ENCODE measurements at regions of chr6 and their contacts with region 1.

Region 1: DNA sequence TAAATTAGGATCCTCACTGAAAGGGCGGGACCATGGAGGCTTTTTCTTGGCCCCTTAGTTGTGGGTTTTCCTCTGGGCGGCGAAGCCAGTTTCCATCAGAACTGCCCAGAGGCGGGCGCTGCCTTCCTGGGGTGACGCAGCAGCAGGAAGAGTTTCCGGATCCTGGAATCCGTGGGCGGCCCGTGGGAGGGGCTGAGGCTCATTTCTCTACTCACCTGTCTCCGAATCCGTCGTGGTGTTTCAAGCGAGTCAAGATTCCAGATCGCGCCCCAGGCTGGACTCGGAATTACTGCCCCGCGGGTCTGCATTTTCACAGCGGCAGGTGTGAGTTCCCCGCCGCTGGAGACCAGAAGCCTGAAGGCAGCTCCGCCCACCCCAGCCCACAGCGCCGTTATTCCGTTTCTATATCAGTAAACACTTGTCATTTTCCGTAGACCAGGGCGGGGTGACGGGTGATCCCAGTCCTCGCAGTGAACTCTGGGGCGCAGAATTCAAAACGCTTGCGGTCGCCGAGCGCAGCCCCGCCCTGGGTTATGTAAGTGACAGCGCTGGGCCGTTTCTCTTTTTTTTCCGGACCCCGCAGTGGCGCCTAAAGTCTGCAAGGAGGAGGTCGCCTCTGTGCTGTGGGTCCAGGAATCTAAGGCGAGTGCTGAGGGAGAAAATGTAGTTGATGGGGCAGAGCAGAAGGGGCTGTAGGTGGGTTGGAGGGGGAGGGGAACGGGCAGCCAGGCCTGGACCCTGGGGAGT is 27.2 kb upstream of the POU5F1 start:
- DNase-seq: peak; percentile 66 to 91 (median 84)
- H3K4me3 ChIP-seq: peak overlapping the region; percentile 48 to 95 (median 78)
- H3K27ac ChIP-seq: peak overlapping the region; percentile 58 to 99 (median 95)
- H3K27me3 ChIP-seq: no peaks in the 10 kb centered on the region
- CTCF ChIP-seq: peak in 7 of 56 donors; percentile 0 to 12 (median 10)

Region 2: DNA sequence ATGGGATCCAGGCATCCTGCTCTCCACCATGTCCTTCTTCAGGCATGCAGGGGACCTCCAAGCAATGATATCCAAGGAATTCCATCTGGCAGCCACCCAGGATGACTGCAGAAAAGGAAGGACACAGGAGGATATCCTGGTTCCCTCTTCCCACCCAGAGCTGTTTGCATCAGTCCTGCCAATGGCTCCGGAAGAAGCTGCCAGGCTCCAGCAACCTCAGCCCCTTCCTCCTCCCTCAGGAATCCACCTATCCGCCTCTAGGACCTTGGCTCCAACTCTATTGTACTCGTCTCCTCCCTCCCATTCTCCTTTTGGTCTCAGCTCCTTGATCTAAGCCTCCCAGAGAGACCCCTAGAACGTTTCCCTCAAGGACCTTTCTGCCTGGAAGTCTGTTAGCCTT is 58.1 kb before region 1 on chr6:
- intact Hi-C with region 1: loop called (anchors 1 to 5 kb)
- DNase-seq: no peak
- H3K4me3 ChIP-seq: no peak overlapping the region
- H3K27ac ChIP-seq: no peak overlapping the region
- H3K27me3 ChIP-seq: no peaks in the 10 kb centered on the region
- CTCF ChIP-seq: no peak

Region 3: DNA sequence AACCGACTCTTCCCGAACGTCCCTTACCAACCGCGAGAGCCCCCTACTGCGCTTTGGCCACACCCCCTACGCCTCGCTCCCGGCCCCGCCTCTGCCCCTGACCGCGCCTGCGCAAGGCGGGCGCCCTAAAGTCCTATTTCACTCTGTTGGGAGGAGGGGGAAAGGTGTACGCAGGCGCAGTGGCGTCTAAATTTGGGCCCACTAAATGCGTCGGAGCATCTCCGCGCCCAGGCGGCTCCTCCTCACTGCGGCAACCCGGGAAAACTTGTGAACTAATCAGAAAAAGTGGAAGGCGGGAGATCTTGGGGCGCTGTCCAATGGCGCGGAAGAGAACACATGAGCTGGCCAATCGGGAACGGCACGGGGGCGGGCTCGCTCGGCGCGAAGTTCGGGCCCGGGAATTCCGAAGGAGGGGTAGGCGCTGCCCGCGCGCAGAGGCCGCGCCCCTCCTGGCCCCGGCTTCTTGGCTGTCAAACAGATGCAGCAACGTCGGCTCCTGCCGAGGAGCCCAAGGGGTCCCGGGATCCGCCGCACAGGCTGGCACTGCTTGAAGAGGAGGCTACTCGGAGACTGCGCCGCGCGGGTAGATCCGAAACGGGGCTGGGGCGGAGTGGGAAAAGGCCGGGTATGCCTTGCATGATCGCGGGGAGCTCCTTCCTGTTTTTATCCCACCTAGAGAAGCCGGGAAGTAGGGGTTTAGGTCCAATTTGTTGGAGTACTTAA is 39.4 kb before region 1 on chr6 and contains the start of gene TCF19:
- intact Hi-C with region 1: loop called (anchors 2 to 5 kb)
- DNase-seq: peak; percentile 93 to 98 (median 98)
- H3K4me3 ChIP-seq: peak within 1 kb of the TSS; percentile 60 to 93 (median 79)
- H3K27ac ChIP-seq: peak within 1 kb of the TSS in 31 of 59 donors; percentile 9 to 81 (median 53)
- H3K27me3 ChIP-seq: no peaks in the 10 kb centered on the region
- CTCF ChIP-seq: peak in 25 of 56 donors; percentile 5 to 57 (median 22)
- total RNA-seq, gene TCF19: 0.80 to 6.6 (median 2.3) TPM

Region 4: DNA sequence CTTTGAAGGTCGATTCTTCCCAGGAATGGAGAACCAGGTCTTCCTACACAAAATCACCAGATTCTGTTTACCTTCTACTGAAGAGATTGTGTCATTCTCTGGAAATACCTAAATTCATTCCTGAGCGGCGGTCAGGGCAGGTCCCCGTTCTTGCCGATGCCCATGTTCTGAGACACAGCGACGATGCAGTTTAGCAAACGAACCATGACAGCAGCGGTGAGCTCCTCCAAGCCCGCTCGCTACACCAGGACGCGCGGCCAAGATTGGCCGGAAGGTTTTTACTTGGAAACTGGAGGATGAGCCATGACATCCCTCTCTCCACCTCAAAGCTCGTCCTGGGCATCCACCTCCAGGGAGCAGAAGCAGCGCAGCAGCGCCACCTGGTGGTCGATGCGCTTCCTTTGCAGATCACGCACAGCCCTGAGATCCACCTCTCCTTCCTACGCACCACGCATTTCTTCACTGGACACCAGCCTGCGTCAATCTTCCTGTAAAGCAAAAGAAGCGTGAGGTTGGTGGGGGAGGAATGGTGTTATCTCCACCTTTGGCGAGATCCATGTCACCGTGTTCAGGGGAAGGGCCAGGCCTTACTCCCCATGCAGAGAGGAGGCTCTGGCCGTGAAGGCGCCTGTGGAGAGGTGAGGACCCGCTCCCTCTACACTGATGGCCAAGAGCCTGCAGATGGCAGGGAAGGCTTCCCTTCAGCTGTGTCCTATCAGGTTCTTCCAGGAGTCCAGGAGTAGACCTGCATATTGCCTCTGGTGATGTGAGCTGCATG is 169.2 kb after region 1 on chr6:
- intact Hi-C with region 1: loop called (anchors 1 kb)
- DNase-seq: peak; percentile 42 to 95 (median 87)
- H3K4me3 ChIP-seq: peak overlapping the region; percentile 16 to 68 (median 49)
- H3K27ac ChIP-seq: peak overlapping the region in 39 of 59 donors; percentile 6 to 80 (median 51)
- H3K27me3 ChIP-seq: peaks cover 0 to 26% (median 0%) of the 10 kb centered on the region in 45 donors
- CTCF ChIP-seq: peak; percentile 86 to 99 (median 95)